AG04449 (cell line): ENCODE measurements at regions of chr1 and their contacts with region 1.

Region 1: DNA sequence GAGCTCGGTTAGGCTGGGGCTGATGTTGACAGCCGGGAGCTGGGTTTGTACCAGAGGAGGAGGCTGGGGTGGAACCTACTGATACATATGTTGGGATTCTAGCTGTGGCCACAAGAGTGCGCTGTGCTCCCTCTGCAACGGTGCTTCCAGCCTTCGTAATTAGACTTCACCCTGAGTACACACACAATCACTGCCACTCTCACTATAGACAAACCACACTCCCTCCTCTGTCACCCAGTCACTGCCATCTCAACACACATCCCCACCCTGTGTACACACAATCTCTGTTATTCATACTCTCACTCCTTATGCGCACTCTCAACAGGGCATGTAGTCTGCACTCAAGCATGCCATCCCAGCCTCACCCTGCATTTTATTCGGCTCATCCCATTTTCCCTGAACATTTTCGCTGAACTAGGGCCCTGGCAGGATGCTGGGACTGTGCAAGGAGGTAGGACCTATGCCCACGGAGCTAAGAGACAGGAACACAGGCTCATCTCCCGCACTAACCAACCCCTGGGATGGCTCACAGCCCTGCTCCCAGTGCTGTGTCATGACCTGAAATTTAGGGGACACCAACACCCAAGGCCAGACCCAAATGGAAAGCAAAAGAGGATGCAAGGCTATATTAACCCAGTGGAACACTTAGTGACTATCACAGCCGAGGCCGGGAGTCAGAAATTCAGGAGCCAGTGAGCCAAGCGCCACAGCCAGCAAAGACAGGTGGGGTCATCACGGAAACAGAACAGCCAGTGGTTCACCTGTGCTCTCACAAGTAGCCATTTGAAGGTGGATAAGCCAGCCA is 5.7 kb downstream of the GJB3 start:
- DNase-seq: peak; percentile 24
- H3K4me3 ChIP-seq: no peak overlapping the region
- CTCF ChIP-seq: peak; percentile 88

Region 2: DNA sequence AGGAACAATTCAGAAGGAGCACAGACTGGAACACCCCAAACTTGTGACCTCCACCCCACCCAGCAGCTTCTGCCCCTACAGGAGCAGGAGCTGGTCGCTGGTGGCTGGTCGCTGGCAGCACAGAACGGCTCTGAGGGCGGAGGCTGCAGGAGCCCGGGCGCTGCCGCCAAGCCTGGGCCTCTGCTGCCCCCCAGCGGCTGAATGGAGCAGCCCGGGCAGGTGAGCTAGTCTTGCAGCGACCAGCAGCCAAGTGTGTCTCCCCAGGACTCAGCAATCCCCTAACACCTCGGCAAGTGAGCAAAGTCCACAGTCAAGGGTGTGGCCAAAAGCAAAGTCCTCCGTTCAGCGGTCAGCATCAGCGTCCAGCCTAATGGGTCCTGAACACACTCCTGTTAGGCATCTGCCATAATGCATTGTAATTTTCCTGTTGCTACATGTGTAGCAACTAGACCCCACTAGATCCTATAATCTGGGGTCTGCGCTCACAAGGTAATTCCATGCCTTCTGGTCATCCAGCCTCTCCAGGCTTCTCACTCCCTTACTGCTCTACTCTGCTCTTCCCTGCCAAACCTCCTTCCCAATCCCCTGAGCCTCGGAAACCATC is 44.0 kb before region 1 on chr1:
- CTCF ChIA-PET with region 1: interaction called, 11 read pairs
- POLR2A ChIA-PET with region 1: no interaction called
- DNase-seq: no peak
- H3K4me3 ChIP-seq: no peak overlapping the region
- CTCF ChIP-seq: peak; percentile 99

Region 3: GRCh38 chr1:34808051-34808810 is 21.5 kb after region 1 on chr1:
- CTCF ChIA-PET with region 1: interaction called, 10 read pairs
- POLR2A ChIA-PET with region 1: no interaction called
- DNase-seq: no peak
- H3K4me3 ChIP-seq: no peak overlapping the region
- CTCF ChIP-seq: no peak

Region 4: DNA sequence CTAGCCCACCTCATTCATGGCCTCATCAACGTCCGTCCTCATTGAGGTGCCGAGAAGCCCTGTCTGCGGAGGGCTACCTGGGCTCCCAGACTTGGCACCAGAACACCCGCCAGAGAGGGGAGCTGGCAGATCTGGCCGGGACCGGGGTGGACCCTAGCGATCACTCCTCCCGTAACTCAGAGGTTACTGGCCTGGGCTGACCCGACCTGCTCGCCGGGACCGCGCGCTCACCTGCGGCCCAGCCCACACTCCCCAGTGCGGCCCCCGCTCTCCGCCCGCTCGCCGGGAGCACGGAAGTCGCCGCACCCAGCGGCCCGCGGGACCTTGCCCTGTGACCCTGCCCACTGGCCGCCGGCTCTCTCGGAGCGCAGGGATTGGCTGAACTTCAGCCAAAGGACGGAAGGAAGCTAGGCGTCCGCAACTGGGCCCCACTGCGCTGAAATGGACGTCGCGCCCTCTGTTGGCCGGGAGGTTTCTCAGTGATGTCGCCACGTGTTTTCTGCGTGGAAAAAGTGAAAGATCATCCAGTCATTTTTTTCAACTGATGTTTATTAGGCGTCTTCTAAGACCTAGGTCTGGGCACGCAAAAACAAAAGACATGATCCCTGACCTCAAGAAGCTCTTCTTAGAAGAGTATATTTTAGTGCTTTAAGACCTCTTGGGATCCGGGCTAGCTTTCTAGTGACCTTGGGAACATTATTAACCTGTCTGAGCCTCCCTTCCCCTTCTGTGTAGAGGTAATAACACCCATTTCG is 72.9 kb after region 1 on chr1 and contains the start of gene SMIM12:
- CTCF ChIA-PET with region 1: interaction called, 17 read pairs
- POLR2A ChIA-PET with region 1: interaction called, 4 read pairs
- DNase-seq: peak; percentile 53
- H3K4me3 ChIP-seq: peak within 1 kb of the TSS; percentile 99
- CTCF ChIP-seq: peak; percentile 91

Region 5: GRCh38 chr1:34865981-34866761 is 79.4 kb after region 1 on chr1:
- CTCF ChIA-PET with region 1: interaction called, 17 read pairs
- POLR2A ChIA-PET with region 1: no interaction called
- DNase-seq: no peak
- H3K4me3 ChIP-seq: peak overlapping the region; percentile 73
- CTCF ChIP-seq: peak; percentile 91